Naive thymus-derived CD4-positive, alpha-beta T cell (primary cell): ENCODE measurements at regions of chr3 and their contacts with region 1.

Region 1: GRCh38 chr3:67654099-67654843 is at the start of gene SUCLG2:
- DNase-seq: peak; percentile 64 to 83 (median 77)
- ATAC-seq: peak; percentile 87
- H3K4me3 ChIP-seq: peak within 1 kb of the TSS; percentile 82
- H3K4me3 Mint-ChIP-seq: peak within 1 kb of the TSS; percentile 81 to 94 (median 90)
- H3K27ac ChIP-seq: peak within 1 kb of the TSS; percentile 87
- H3K27ac Mint-ChIP-seq: peak within 1 kb of the TSS; percentile 90 to 98 (median 93)
- H3K4me1 ChIP-seq: peaks cover 33 to 49% of the 10 kb centered on the region in 2 donors
- H3K4me1 Mint-ChIP-seq: peaks cover 45 to 77% (median 69%) of the 10 kb centered on the region in 7 donors
- H3K27me3 ChIP-seq: no peaks in the 10 kb centered on the region
- H3K27me3 Mint-ChIP-seq: no peaks in the 10 kb centered on the region
- total RNA-seq, gene SUCLG2: 49.7 to 75.9 (median 61.4) TPM

Region 2: DNA sequence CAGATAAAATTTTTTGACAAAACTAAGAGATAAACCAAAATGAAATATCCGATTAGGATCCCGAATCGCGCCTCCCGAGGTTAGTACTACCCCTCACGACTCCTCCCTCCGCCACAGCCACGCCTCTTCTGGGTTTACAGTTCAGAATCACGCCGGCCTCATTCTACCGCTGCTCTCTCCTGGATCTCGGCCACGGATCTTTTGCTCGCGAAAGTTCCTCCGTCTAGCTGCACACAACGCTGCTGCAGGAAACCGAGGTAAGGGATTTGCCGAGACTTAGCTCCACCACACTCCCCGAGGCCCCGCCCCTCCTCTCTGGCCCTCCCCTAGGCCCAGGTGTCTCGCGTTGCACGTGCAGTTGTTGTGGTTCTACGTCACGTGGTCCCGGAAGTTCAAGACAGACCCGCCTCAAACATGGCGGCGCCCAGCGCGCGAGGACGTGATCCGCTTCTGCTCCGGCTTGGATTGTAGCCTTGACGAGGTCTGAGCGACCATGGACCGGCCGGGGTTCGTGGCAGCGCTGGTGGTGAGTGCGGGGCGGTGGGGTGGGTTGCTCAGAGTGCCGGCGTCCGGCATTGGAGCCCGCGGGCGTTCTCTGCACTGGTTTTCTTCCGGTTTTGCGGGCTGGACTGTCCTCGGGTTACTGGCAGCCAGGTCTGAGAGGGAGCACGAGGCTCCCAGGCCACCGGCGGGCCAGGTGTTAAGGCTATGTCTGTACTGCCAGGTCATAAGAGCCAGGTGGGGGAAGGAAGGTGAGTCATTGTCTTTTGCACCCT is 1433.5 kb before region 1 on chr3 and contains the start of gene SLC25A26:
- CTCF ChIA-PET with region 1: no interaction called
- POLR2A ChIA-PET with region 1: no interaction called
- intact Hi-C with region 1: loop called in 1 of 2 experiments (anchors 1 kb)
- DNase-seq: peak; percentile 90 to 99 (median 97)
- ATAC-seq: peak; percentile 99
- H3K4me3 ChIP-seq: peak within 1 kb of the TSS; percentile 70
- H3K4me3 Mint-ChIP-seq: peak within 1 kb of the TSS; percentile 91 to 99 (median 96)
- H3K27ac ChIP-seq: peak within 1 kb of the TSS; percentile 90
- H3K27ac Mint-ChIP-seq: peak within 1 kb of the TSS; percentile 85 to 98 (median 95)
- H3K4me1 ChIP-seq: peaks cover 7% of the 10 kb centered on the region in 2 donors
- H3K4me1 Mint-ChIP-seq: peaks cover 15 to 55% (median 44%) of the 10 kb centered on the region in 7 donors
- H3K27me3 ChIP-seq: no peaks in the 10 kb centered on the region
- H3K27me3 Mint-ChIP-seq: peaks cover 0 to 2% (median 0%) of the 10 kb centered on the region in 5 donors
- total RNA-seq, gene SLC25A26: 14.1 to 25.5 (median 17.9) TPM

Region 3: DNA sequence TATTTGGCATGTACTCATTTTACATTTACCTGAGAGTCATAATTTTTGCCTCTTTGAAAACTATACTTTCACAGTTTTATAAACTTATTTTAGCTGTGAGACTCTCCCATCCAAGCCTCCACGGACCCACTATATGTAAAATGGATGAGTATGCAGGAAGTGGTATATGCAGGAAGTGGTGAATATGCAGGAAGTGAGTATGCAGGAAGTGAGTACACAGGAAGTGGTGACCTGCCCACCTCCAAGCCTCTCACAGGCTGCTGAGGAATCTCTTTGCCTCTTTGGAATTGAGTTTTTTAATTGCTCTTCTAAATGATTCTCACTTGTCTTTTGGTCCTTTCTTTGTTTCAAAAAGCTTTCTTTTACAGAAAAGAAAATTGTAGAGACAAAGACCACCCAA is 571.0 kb before region 1 on chr3:
- CTCF ChIA-PET with region 1: no interaction called
- POLR2A ChIA-PET with region 1: no interaction called
- intact Hi-C with region 1: loop called in 1 of 2 experiments (anchors 5 kb)
- DNase-seq: peak in 8 of 9 donors; percentile 37 to 75 (median 67)
- ATAC-seq: peak; percentile 87
- H3K4me3 ChIP-seq: peak overlapping the region; percentile 56
- H3K4me3 Mint-ChIP-seq: peak overlapping the region; percentile 54 to 91 (median 71)
- H3K27ac ChIP-seq: peak overlapping the region; percentile 61
- H3K27ac Mint-ChIP-seq: peak overlapping the region; percentile 73 to 96 (median 88)
- H3K4me1 ChIP-seq: peaks cover 19 to 22% of the 10 kb centered on the region in 2 donors
- H3K4me1 Mint-ChIP-seq: peaks cover 16 to 46% (median 27%) of the 10 kb centered on the region in 7 donors
- H3K27me3 ChIP-seq: no peaks in the 10 kb centered on the region
- H3K27me3 Mint-ChIP-seq: peaks cover 0 to 12% (median 6%) of the 10 kb centered on the region in 5 donors

Region 4: GRCh38 chr3:67245545-67245944 is 408.7 kb before region 1 on chr3:
- CTCF ChIA-PET with region 1: no interaction called
- POLR2A ChIA-PET with region 1: no interaction called
- intact Hi-C with region 1: no loop called
- DNase-seq: no peak
- ATAC-seq: no peak
- H3K4me3 ChIP-seq: no peak overlapping the region
- H3K4me3 Mint-ChIP-seq: no peak overlapping the region
- H3K27ac ChIP-seq: no peak overlapping the region
- H3K27ac Mint-ChIP-seq: no peak overlapping the region
- H3K4me1 ChIP-seq: no peaks in the 10 kb centered on the region
- H3K4me1 Mint-ChIP-seq: no peaks in the 10 kb centered on the region
- H3K27me3 ChIP-seq: no peaks in the 10 kb centered on the region
- H3K27me3 Mint-ChIP-seq: peaks cover 0 to 4% (median 0%) of the 10 kb centered on the region in 5 donors

Region 5: GRCh38 chr3:67635257-67635656 is 19.0 kb before region 1 on chr3:
- CTCF ChIA-PET with region 1: no interaction called
- POLR2A ChIA-PET with region 1: interaction called, 4 read pairs
- intact Hi-C with region 1: loop called in 1 of 2 experiments (anchors 1 kb)
- DNase-seq: no peak
- ATAC-seq: no peak
- H3K4me3 ChIP-seq: no peak overlapping the region
- H3K4me3 Mint-ChIP-seq: peak overlapping the region in 5 of 10 donors; percentile 3 to 35 (median 7)
- H3K27ac ChIP-seq: no peak overlapping the region
- H3K27ac Mint-ChIP-seq: peak overlapping the region in 8 of 9 donors; percentile 35 to 84 (median 75)
- H3K4me1 ChIP-seq: peaks cover 0 to 37% of the 10 kb centered on the region in 2 donors
- H3K4me1 Mint-ChIP-seq: peaks cover 36 to 96% (median 81%) of the 10 kb centered on the region in 7 donors
- H3K27me3 ChIP-seq: no peaks in the 10 kb centered on the region
- H3K27me3 Mint-ChIP-seq: no peaks in the 10 kb centered on the region

Region 6: DNA sequence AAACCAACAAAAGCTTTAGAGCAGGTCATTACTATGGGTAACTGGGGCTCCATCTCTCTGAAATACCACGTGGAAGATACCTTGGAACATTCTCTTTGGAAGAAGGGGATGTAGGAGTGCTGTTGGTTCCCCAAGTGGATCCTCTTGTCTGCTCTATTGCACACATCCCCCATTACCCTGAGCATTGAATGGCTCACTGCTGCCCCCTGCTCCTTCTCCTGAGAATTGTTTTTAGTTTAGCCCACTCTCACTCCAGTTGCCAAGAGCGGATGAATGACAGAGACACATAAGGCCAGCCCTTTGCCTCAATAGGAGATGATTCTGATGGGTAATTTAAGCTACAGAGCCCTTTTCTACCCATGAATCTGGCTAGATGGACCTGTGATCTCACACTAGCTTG is 135.8 kb after region 1 on chr3:
- CTCF ChIA-PET with region 1: interaction called, 11 read pairs
- POLR2A ChIA-PET with region 1: no interaction called
- intact Hi-C with region 1: loop called (anchors 1 to 5 kb)
- DNase-seq: peak; percentile 17 to 75 (median 61)
- ATAC-seq: peak; percentile 78
- H3K4me3 ChIP-seq: no peak overlapping the region
- H3K4me3 Mint-ChIP-seq: peak overlapping the region in 3 of 10 donors; percentile 3 to 19 (median 19)
- H3K27ac ChIP-seq: no peak overlapping the region
- H3K27ac Mint-ChIP-seq: peak overlapping the region in 1 of 9 donors; percentile 3
- H3K4me1 ChIP-seq: peaks cover 0 to 9% of the 10 kb centered on the region in 2 donors
- H3K4me1 Mint-ChIP-seq: peaks cover 6 to 23% (median 15%) of the 10 kb centered on the region in 7 donors
- H3K27me3 ChIP-seq: no peaks in the 10 kb centered on the region
- H3K27me3 Mint-ChIP-seq: peaks cover 0 to 7% (median 0%) of the 10 kb centered on the region in 5 donors

Region 7: GRCh38 chr3:68088216-68088615 is 433.9 kb after region 1 on chr3:
- CTCF ChIA-PET with region 1: no interaction called
- POLR2A ChIA-PET with region 1: no interaction called
- intact Hi-C with region 1: loop called (anchors 10 kb)
- DNase-seq: peak in 7 of 9 donors; percentile 61 to 81 (median 74)
- ATAC-seq: peak; percentile 86
- H3K4me3 ChIP-seq: peak overlapping the region; percentile 23
- H3K4me3 Mint-ChIP-seq: peak overlapping the region; percentile 8 to 75 (median 39)
- H3K27ac ChIP-seq: no peak overlapping the region
- H3K27ac Mint-ChIP-seq: peak overlapping the region in 8 of 9 donors; percentile 1 to 85 (median 48)
- H3K4me1 ChIP-seq: peaks cover 27 to 37% of the 10 kb centered on the region in 2 donors
- H3K4me1 Mint-ChIP-seq: peaks cover 25 to 85% (median 71%) of the 10 kb centered on the region in 7 donors
- H3K27me3 ChIP-seq: no peaks in the 10 kb centered on the region
- H3K27me3 Mint-ChIP-seq: peaks cover 0 to 4% (median 0%) of the 10 kb centered on the region in 5 donors